ENCODE measurements at regions of chr15 and their contacts with region 1.

Region 1: GRCh38 chr15:45118131-45118588 is 4.0 kb downstream of the DUOXA2 start:
- DNase-seq: peak; percentile 87 to 96 (median 93)
- H3K4me3 ChIP-seq: no peak overlapping the region
- H3K27ac ChIP-seq: no peak overlapping the region
- H3K4me1 ChIP-seq: peaks cover 6 to 13% of the 10 kb centered on the region in 2 donors
- H3K27me3 ChIP-seq: peaks cover 45% of the 10 kb centered on the region
- CTCF ChIP-seq: peak; percentile 93 to 99 (median 98)
- POLR2A ChIP-seq: no peak

Region 2: DNA sequence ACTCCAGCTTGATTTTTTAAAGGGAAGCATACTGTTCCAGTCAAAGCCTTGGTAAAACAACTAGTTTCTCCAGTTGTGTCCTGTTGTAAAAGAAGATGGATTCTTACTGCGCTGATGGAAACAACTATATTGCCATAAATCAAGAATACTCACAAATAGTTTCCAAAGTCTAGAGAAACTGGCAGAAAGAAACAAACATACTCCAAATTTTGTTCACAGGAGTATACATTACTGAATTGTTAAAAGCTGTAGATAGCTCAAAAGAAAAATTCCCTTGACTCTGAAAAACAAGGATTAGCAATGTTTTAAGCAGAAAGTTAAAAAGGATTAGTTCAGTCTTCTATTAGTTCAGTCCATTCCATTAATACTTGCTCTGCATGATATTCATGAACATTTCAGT is 67.6 kb before region 1 on chr15:
- intact Hi-C with region 1: loop called in 1 of 2 experiments (anchors 10 kb)
- DNase-seq: no peak
- H3K4me3 ChIP-seq: no peak overlapping the region
- H3K27ac ChIP-seq: no peak overlapping the region
- H3K4me1 ChIP-seq: peaks cover 0 to 5% of the 10 kb centered on the region in 2 donors
- H3K27me3 ChIP-seq: no peaks in the 10 kb centered on the region
- CTCF ChIP-seq: no peak
- POLR2A ChIP-seq: no peak